ENCODE measurements at regions of chr12 and their contacts with region 1.

Region 1: DNA sequence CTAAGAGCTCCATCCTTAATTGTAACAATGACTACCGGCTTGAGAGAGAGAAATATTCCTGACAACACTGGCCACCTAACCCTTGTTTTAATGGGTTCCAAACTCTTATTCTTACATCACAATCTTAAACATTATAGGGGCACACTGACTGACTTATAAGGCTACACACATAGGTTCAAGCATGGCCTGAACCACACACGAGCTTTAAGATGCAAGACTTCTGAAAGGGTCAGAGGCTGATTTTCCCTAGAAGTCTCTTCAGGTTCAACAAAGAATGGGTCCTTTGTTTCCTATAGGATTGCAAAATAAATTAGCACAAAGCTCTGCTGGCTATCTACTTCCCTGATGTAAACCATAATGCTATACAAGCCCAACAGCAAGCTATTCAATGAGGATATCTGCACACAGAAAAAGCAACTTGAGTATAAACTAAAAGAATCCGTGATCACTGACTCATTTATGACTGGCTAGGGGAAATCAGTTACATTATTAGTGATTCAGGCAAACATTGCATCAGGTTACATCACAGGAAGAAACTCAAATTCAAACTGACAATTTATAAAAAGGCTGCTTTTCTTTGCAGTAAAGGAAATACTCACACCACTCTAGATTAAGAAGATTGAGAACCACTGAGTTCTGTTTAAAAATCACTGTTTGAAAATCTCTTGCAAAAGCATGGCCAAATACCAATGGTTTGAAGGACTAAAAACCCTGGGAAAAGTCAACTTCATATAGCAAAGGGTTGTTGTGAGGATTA is 8.5 kb downstream of the BTG1 start:
- DNase-seq: no peak
- ATAC-seq: no peak

Region 2: GRCh38 chr12:91825999-91826398 is 311.1 kb before region 1 on chr12:
- intact Hi-C with region 1: no loop called
- DNase-seq: no peak
- ATAC-seq: no peak

Region 3: DNA sequence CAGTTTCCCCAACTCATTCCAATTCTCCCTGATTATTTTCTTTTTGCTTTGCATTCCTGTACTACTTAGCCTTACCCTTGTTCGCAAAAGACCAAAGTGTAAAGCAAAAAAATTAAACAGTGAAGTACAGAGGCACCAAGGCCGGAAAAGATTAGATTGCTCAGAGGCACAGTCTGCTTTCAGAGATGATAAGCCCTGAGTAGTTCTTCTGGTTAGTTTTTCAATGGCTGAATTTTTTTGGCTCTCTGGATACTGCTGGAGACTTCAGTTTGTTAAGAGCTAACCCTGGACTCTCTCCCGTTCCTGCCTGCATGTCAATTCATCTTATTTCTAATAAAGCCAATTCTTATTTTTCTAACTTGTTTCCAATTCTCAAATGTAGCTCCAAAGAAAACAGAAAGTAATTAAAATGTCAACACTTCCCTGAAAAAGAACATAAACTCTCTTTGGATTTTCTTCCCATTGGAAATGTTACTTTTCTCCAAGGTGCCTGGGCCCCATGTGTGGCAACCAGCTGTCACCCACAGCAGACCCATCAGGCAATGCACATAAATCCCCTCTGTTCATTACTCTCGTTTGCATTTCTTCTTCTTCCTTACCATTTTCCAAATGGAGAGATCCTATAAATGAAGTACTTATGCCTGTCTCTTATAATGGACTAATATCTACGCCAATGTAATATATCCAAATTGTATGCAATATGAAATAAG is 134.3 kb before region 1 on chr12:
- intact Hi-C with region 1: loop called (anchors 2 kb)
- DNase-seq: no peak
- ATAC-seq: peak; percentile 69

Region 4: DNA sequence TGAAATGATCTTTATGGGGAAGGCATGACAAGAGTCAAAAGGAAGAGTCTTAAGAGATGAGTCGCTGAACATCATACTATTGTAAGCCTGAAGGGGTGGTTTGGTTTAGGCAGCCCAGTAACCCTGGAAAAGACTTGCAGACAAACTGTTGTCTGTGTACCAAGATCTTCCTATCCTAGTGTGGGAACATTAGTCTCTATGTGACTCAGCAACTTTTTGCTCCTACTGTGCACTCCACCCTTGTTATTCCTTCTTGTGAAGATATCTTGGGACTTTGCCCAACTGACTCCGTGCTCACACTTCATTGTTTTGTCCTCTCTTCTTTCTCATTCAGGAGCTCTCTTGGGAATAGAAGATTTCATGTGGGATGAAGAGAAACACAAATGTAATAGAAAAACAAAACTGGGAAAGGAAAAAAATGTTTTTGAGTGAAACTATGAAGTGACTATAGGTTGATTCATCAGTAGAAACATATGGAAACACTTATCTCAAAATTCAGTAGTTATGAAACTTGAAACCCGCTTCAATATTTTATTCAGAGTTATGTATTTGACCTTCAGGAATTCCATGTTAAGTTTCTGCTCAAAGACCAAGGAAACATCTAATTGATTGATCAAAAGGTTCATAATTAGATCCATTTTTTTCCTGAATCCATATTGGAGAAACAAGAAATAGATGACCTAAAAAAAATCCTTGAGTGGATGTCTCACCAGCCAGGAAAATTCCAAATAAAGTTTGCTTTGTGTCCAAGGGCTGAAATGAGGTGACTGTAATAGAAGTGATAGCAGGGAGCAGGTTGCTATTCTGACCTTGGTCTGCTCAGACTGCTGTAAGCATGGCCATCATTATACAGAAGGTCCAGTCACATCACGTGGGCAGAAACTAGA is 58.7 kb before region 1 on chr12:
- intact Hi-C with region 1: loop called (anchors 5 kb)
- DNase-seq: no peak
- ATAC-seq: peak; percentile 69

Region 5: DNA sequence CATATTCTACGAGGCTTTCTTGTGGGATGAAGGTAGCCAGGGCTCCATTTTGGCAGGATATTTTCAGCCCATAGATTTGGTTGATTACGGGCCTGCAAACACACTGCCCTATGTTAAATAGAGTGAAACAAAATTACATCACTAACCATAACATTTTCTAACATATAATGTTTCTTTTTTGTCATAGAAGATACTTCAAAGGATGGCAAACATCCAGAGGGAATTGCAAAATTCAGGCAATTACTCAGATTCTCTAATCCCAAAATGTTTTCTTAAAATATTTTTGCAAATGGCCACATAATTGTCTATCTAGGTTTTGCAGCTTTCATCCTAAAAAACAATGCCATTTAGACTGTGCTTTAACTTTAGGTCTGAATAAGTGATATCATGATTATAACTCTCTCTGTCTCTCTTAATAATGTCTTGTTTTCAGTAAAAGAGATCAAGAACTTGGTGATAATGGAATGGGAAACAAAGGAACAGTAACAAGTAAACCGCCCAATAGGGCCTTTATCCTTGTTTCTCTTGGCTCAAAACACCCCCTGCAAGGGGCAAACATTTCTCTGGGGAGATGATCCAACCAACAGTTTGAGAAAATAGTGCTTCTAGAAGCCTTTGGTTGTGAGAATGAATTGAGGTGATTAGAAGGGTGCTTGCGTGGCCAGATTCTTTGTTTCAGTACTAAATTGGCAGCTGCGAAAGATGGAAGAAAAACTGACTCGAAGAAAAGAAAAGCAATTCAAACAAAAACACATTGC is 62.9 kb after region 1 on chr12:
- intact Hi-C with region 1: no loop called
- DNase-seq: no peak
- ATAC-seq: no peak

Region 6: DNA sequence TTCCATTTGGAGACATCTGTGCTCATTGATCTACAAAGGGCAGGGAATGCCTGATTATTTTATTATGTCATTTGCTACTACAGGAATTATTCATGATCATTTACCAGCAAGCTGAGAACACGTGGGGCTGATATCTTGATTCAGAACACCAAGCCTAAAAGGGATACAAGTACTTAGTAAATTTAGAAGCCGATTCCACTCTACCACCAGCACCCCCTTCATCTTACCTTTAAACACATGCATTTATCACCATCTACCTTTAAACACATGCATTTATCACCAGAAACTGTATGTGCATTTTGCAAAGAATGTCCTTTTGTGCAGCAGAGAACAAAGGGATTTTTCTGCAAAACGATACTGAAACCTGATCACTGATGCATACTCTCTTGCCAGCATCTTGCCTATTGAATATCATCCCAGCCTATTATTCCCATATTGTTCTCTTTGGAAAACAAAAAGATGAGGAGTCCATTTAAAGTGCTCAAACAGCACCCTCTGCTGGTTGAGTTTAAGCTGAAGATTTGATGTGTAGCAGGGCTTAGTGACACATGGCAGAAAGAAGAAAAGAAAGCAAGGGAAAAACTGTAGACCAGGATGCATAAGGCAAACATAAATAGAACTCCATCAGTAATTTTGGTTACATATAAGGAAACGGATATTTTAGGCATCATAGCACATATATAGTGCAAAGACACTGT is 433.1 kb after region 1 on chr12:
- intact Hi-C with region 1: no loop called
- DNase-seq: no peak
- ATAC-seq: peak; percentile 79